BJ (cell line): ENCODE measurements at regions of chr5 and their contacts with region 1.

Region 1: GRCh38 chr5:160199410-160199911 is 29.8 kb upstream of the FABP6 start:
- DNase-seq: no peak
- H3K4me3 ChIP-seq: peak overlapping the region; percentile 37
- H3K27me3 ChIP-seq: no peaks in the 10 kb centered on the region
- CTCF ChIP-seq: peak; percentile 51

Region 2: GRCh38 chr5:160021831-160022446 is 177.5 kb before region 1 on chr5:
- CTCF ChIA-PET with region 1: interaction called, 17 read pairs
- POLR2A ChIA-PET with region 1: no interaction called
- DNase-seq: no peak
- H3K4me3 ChIP-seq: no peak overlapping the region
- H3K27me3 ChIP-seq: no peaks in the 10 kb centered on the region
- CTCF ChIP-seq: peak; percentile 69

Region 3: DNA sequence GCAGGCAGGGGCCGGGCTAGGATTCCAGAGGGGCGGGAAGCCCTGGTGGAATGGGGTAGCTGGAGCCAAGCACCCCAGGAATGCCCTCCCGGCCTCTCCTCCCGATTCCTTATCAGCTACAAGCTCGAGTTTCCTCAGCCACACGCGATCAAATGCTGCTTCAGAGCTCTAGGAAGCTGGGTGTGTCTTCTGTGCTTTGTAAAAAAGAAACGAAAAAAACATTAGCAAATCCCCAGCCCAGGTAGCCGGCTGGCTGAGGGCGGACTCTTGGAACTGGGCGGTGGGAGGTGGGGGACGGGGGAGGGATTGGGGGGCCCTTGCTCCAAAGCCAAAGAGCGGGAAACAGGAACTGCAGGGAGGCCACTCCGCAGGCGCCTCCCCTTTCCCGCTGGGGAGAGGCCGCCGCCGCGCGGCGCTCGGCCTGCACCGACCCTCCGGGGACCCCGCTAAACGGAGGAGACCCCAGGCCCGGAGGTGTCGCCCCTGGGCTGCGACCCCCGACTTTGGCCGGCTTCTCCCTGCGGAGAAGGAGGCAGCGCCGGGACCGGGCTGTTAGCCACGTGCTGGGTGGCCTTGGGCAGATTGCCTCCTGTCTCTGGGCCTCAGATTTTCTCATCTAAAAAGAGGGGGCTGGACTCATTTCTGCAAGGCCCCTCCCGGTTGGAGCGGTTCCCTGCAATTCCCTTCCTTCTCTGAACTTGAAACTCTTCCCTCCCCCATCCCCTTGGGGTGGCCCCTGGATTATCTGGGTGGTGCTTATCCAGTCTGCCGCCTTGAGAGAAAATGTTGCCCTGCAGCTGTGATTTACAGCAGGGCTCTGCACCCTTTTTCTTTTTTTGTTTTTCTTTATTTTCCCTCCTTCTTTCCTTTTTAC is 11.1 kb before region 1 on chr5:
- CTCF ChIA-PET with region 1: interaction called, 12 read pairs
- POLR2A ChIA-PET with region 1: interaction called, 3 read pairs
- DNase-seq: no peak
- H3K4me3 ChIP-seq: peak overlapping the region; percentile 45
- H3K27me3 ChIP-seq: no peaks in the 10 kb centered on the region
- CTCF ChIP-seq: peak; percentile 16; the same call in 1 of the 2 replicates